ENCODE measurements at regions of chr1 and their contacts with region 1.

Region 1: DNA sequence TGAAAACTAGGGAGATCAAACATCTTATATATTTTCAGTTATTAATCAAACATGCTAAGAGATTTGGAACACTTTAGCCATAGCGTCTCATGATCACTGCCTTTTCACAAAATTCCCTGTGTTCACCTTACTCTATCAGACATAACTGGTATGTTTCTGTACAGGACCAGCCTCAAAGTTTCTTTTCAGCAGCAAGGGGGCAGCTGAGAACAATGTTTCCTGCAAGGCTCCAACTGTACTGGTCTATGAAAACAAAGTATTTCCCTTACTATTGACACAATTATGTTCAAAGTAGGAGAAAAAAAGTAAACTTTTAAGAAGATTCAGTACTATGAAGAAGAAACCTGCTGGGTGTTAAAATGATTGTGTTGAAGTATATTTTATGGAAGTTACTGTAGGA is 98.5 kb downstream of the ATF6 start:
- DNase-seq: peak in 2 of 9 experiments; percentile 5 to 36
- ATAC-seq: no peak
- H3K4me3 ChIP-seq: no peak overlapping the region
- H3K4me3 Mint-ChIP-seq: no peak overlapping the region
- H3K27ac ChIP-seq: no peak overlapping the region
- H3K27ac Mint-ChIP-seq: no peak overlapping the region
- H3K4me1 ChIP-seq: no peaks in the 10 kb centered on the region
- H3K4me1 Mint-ChIP-seq: no peaks in the 10 kb centered on the region
- H3K27me3 ChIP-seq: no peaks in the 10 kb centered on the region
- H3K27me3 Mint-ChIP-seq: no peaks in the 10 kb centered on the region
- CTCF ChIP-seq: peak; percentile 32

Region 2: DNA sequence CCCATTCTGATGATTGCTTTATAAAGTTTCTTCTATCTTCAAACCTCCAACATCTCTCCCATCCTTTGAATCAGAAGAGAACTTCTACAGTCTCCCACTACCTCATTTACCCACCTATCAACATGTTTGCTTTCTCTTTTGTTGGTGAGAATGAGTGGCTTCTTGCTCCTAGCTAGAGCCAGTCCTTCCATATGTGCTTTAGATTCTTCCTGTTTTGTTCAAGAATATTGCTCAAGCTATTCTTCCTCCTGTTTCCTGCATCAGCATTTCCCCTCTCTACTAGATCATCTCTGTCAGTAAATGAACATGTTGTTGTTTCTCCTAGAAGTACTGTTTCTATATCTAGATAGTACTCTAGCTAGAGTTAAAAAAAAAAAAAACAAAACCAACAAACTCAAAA is 92.2 kb before region 1 on chr1:
- CTCF ChIA-PET with region 1: no interaction called
- POLR2A ChIA-PET with region 1: no interaction called
- intact Hi-C with region 1: no loop called
- DNase-seq: no peak
- ATAC-seq: no peak
- H3K4me3 ChIP-seq: no peak overlapping the region
- H3K4me3 Mint-ChIP-seq: no peak overlapping the region
- H3K27ac ChIP-seq: peak overlapping the region in 1 of 2 experiments; percentile 34
- H3K27ac Mint-ChIP-seq: no peak overlapping the region
- H3K4me1 ChIP-seq: peaks cover 74% of the 10 kb centered on the region
- H3K4me1 Mint-ChIP-seq: peaks cover 26% of the 10 kb centered on the region
- H3K27me3 ChIP-seq: no peaks in the 10 kb centered on the region
- H3K27me3 Mint-ChIP-seq: no peaks in the 10 kb centered on the region
- CTCF ChIP-seq: no peak

Region 3: DNA sequence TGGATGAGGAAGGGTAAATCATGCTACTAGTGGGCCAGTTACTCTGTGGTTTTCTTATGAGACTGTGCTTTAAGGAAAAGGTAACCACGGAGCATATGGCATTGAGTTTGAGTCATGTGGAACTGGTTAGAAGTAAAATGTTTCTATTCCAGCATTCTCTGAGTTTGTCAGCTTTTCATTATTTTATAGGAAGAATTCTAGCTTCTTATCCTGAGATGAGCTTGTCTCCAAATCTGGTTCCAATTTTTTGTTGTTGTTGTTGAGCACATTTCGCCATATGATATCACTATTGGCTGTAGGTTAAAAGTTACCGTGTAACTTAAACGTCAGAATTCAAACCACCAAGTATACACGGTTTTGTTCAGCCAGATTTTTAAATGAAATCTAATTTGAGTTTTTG is 28.6 kb before region 1 on chr1:
- CTCF ChIA-PET with region 1: no interaction called
- POLR2A ChIA-PET with region 1: no interaction called
- intact Hi-C with region 1: no loop called
- DNase-seq: no peak
- ATAC-seq: no peak
- H3K4me3 ChIP-seq: no peak overlapping the region
- H3K4me3 Mint-ChIP-seq: no peak overlapping the region
- H3K27ac ChIP-seq: no peak overlapping the region
- H3K27ac Mint-ChIP-seq: no peak overlapping the region
- H3K4me1 ChIP-seq: no peaks in the 10 kb centered on the region
- H3K4me1 Mint-ChIP-seq: peaks cover 6% of the 10 kb centered on the region
- H3K27me3 ChIP-seq: no peaks in the 10 kb centered on the region
- H3K27me3 Mint-ChIP-seq: no peaks in the 10 kb centered on the region
- CTCF ChIP-seq: no peak

Region 4: GRCh38 chr1:162035241-162035640 is 170.7 kb after region 1 on chr1:
- CTCF ChIA-PET with region 1: interaction called, 41 read pairs
- POLR2A ChIA-PET with region 1: no interaction called
- intact Hi-C with region 1: loop called (anchors 1 kb)
- DNase-seq: no peak
- ATAC-seq: no peak
- H3K4me3 ChIP-seq: no peak overlapping the region
- H3K4me3 Mint-ChIP-seq: no peak overlapping the region
- H3K27ac ChIP-seq: no peak overlapping the region
- H3K27ac Mint-ChIP-seq: no peak overlapping the region
- H3K4me1 ChIP-seq: no peaks in the 10 kb centered on the region
- H3K4me1 Mint-ChIP-seq: peaks cover 4% of the 10 kb centered on the region
- H3K27me3 ChIP-seq: no peaks in the 10 kb centered on the region
- H3K27me3 Mint-ChIP-seq: peaks cover 11% of the 10 kb centered on the region
- CTCF ChIP-seq: no peak

Region 5: DNA sequence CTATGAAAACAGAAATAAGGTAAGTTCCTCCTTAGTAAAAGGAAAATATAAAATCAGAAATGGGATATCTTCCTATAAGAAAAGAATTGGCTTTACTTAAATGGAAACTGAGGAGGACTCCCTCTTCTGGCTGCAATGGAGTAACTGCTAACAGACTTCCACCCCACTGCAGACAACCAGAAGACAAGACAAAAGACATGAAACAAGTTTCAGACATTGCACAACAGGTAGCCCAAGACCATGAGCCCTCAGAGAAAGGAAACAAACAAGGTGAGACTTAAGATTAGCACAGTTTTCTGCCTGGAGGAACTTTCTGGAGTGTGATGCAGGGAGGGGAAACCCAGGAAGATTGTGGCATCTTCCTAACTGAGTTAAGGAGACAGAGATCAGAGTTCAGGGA is 176.1 kb after region 1 on chr1:
- CTCF ChIA-PET with region 1: interaction called, 41 read pairs
- POLR2A ChIA-PET with region 1: no interaction called
- intact Hi-C with region 1: loop called (anchors 1 kb)
- DNase-seq: no peak
- ATAC-seq: no peak
- H3K4me3 ChIP-seq: no peak overlapping the region
- H3K4me3 Mint-ChIP-seq: no peak overlapping the region
- H3K27ac ChIP-seq: no peak overlapping the region
- H3K27ac Mint-ChIP-seq: no peak overlapping the region
- H3K4me1 ChIP-seq: no peaks in the 10 kb centered on the region
- H3K4me1 Mint-ChIP-seq: peaks cover 2% of the 10 kb centered on the region
- H3K27me3 ChIP-seq: no peaks in the 10 kb centered on the region
- H3K27me3 Mint-ChIP-seq: peaks cover 17% of the 10 kb centered on the region
- CTCF ChIP-seq: no peak

Region 6: DNA sequence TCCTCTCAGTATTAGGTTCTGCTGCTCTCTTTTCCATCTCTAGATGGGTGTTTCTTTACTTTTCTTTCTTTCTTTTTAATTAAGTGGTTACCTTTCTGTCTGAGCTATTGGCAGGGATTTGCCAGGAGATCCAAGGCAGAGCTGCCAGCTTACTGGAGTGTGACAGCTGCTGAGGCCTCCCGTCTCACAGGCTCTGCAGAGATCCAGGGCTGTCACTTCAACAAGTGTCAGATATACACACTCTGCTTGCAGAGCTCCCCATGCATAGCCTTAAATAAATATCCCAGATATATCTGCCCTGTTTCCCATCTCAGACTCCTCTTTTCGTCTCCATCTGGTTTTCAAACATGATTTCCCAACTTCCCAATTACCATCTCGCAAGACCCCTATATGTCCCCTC is 329.2 kb after region 1 on chr1:
- CTCF ChIA-PET with region 1: no interaction called
- POLR2A ChIA-PET with region 1: no interaction called
- intact Hi-C with region 1: no loop called
- DNase-seq: no peak
- ATAC-seq: no peak
- H3K4me3 ChIP-seq: no peak overlapping the region
- H3K4me3 Mint-ChIP-seq: no peak overlapping the region
- H3K27ac ChIP-seq: no peak overlapping the region
- H3K27ac Mint-ChIP-seq: no peak overlapping the region
- H3K4me1 ChIP-seq: no peaks in the 10 kb centered on the region
- H3K4me1 Mint-ChIP-seq: no peaks in the 10 kb centered on the region
- H3K27me3 ChIP-seq: no peaks in the 10 kb centered on the region
- H3K27me3 Mint-ChIP-seq: peaks cover 16% of the 10 kb centered on the region
- CTCF ChIP-seq: no peak

Measured in CD8-positive, alpha-beta T cell (primary cell).